ENCODE measurements at regions of chr1 and their contacts with region 1.

Region 1: DNA sequence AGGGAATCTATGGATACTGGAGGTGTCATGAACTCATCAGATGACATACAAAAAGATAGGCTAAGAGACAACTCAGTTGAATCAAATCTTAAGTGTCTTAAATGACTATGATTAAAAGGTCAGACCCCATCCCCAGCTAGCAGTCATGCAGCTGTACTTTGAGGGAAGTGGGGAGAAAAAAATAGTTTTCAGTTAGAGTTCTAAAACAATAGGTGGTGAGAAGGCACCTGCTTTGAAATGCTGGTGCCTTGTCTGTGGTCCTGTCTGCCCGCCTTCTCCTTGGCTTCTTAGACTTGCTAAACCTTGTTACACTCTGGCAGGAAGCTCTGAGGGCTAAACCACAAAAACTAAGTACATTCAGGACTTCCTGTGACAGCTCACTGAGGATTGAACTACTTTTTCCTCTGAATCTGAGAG is 15.3 kb downstream of the CD2 start:
- DNase-seq: peak; percentile 82
- H3K4me3 Mint-ChIP-seq: peak overlapping the region; percentile 49
- H3K27ac Mint-ChIP-seq: peak overlapping the region; percentile 99
- H3K4me1 Mint-ChIP-seq: peaks cover 89% of the 10 kb centered on the region
- H3K27me3 Mint-ChIP-seq: no peaks in the 10 kb centered on the region

Region 2: GRCh38 chr1:116754198-116754977 is 15.2 kb before region 1 on chr1 and contains the start of gene CD2:
- CTCF ChIA-PET with region 1: interaction called, 50 read pairs
- POLR2A ChIA-PET with region 1: interaction called, 488 read pairs
- DNase-seq: peak; percentile 73
- H3K4me3 Mint-ChIP-seq: peak within 1 kb of the TSS; percentile 99
- H3K27ac Mint-ChIP-seq: peak within 1 kb of the TSS; percentile 95
- H3K4me1 Mint-ChIP-seq: peaks cover 39% of the 10 kb centered on the region
- H3K27me3 Mint-ChIP-seq: no peaks in the 10 kb centered on the region
- total RNA-seq, gene CD2: 329 to 340 TPM

Region 3: GRCh38 chr1:116794804-116795481 is 25.4 kb after region 1 on chr1:
- CTCF ChIA-PET with region 1: interaction called, 34 read pairs
- POLR2A ChIA-PET with region 1: interaction called, 1,051 read pairs
- DNase-seq: no peak
- H3K4me3 Mint-ChIP-seq: no peak overlapping the region
- H3K27ac Mint-ChIP-seq: no peak overlapping the region
- H3K4me1 Mint-ChIP-seq: peaks cover 74% of the 10 kb centered on the region
- H3K27me3 Mint-ChIP-seq: no peaks in the 10 kb centered on the region

Region 4: DNA sequence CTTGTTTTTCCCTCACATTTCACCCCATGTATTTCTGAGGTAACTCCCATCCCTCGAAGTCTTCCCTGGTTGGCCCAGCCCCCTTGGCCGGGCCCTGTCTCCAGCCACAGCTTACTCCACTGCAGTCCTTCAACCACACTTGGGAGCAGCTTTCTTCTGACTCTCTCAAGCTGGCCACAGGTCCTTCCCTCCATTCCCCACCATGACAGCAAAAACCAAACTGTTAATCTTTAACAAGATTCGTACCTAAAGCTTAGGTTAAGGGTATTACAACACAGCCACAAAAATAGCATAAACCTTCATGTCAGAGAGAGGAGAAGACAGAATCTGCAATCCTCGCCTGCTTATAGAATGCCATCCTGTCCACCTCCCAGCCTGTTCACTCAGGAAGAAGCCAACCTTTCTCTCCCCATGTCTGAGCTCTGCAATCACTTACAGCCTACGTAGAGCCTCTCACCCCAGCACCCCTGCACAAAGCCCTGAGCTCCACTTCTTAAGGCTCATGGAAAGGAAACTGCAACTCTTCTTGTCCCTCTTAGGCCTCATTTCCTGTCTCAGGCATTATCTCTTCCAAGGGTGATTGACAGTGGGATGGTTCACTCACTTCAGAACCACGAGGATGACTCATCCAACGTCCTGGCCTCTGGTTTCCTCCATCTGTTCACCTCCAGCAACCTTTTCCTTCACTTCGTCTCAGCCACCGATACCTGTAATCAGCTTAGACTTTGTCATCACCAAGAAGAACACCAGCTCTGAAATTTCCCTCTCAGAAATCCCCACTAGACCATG is 57.4 kb after region 1 on chr1:
- CTCF ChIA-PET with region 1: interaction called, 5 read pairs
- POLR2A ChIA-PET with region 1: interaction called, 21 read pairs
- DNase-seq: peak; percentile 77
- H3K4me3 Mint-ChIP-seq: peak overlapping the region; percentile 58
- H3K27ac Mint-ChIP-seq: peak overlapping the region; percentile 96
- H3K4me1 Mint-ChIP-seq: peaks cover 55% of the 10 kb centered on the region
- H3K27me3 Mint-ChIP-seq: no peaks in the 10 kb centered on the region

Measured in activated CD4-positive, alpha-beta memory T cell treated with anti-CD3 and anti-CD28 coated beads, Interleukin-2, amount 10 ng/mL, durations not matched to agents 7 days and 5 days (primary cell).